GM18951 (cell line): ENCODE measurements at regions of chr6 and their contacts with region 1.

Region 1: DNA sequence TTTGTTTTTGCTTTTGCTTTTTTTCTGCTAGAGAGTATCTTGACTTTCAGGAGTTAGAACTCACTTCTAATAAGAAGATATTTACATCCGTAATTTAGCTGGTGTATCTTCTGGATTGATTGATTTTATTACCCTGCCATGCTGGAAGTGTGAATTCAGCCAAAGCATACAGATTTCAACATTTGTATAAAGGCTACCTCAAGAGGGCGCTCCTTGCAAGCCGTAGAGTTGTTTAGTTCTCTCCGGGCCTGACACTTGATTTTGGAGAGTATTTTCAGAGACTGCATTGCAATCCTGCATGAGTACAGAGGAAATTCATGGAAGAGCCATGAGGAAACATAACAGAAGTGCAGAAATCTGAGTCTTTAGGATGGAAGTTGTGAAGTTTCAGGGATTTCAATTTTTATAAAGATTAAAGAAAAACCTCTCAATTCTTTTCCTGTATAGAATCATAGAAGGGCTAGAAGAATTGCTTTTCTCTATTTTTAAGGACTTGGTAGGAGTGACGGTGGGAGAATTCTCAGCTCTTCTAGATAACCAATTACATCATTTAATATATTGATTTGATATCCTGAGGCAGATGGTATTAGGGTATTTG is 66.7 kb upstream of the TIAM2 start:
- POLR2A ChIP-seq: no peak

Region 2: DNA sequence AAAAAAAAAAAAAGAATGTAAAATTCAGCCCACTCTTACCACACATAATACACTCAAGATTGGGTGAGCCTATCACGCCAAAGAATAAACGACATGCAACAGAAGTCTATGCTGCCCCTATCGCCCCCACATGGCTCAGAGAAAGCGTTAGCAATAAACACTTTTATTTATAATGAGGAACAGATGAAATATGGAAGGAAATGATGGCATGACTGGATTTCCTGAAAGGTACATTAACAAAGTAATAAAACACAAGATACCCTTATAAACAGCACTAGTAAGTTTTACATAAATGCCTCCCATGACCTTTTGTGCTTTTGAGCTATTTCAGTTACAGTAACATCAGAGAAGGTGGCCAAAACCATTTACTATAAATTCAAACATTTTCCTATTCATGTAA is 266.7 kb before region 1 on chr6:
- in situ Hi-C with region 1: no loop called
- POLR2A ChIP-seq: no peak

Region 3: GRCh38 chr6:155253337-155253736 is 324.9 kb after region 1 on chr6:
- in situ Hi-C with region 1: loop called (anchors 5 kb)
- POLR2A ChIP-seq: no peak